GM10248 (cell line): ENCODE measurements at regions of chr12 and their contacts with region 1.

Region 1: DNA sequence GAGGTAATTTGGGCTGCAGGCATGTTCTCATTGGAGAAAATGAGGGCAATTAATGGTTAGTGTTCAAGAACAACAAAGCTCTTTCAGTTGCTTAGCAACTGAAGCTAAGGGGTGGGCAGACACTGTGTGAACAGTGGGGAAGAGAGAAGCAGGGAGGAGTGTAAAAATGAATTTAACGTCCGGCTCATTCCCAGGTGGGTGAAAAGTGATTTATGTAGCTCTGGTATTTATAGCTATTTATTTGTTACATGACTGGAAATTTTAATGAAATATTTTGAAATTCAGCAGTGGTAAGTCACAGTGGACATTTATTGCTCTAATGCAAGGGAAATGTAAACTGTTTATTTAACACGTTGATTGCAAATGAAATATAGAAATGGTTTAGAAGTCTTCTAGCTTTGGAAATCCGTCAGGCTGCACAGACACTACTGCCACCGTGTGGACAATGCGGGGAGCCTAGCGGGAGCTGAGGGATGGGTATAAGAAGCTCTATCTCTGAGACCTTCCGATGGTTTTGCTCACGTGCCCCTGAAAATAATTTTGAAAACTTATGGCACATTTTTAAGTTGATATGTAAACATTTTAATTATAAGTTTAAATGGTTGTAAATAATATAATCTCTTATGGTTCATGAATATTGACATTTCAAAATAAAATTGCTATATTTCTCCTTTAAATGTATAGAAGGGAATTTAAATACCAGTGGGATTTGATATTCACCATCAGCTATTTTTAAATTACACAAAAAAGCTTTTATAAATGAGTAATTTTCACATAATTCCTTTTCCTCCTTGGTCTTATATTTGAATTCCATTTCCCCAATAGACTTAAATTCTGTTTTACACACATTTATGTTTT is 54.4 kb downstream of the E2F7 start:
- DNase-seq: peak; percentile 72
- CTCF ChIP-seq: peak; percentile 83

Region 2: GRCh38 chr12:76621582-76622024 is 389.3 kb before region 1 on chr12:
- CTCF ChIA-PET with region 1: interaction called, 45 read pairs
- POLR2A ChIA-PET with region 1: no interaction called
- DNase-seq: peak; percentile 63
- CTCF ChIP-seq: peak; percentile 87

Region 3: GRCh38 chr12:76927170-76927784 is 83.6 kb before region 1 on chr12:
- CTCF ChIA-PET with region 1: no interaction called
- POLR2A ChIA-PET with region 1: no interaction called
- DNase-seq: peak; percentile 44
- CTCF ChIP-seq: peak; percentile 34

Region 4: DNA sequence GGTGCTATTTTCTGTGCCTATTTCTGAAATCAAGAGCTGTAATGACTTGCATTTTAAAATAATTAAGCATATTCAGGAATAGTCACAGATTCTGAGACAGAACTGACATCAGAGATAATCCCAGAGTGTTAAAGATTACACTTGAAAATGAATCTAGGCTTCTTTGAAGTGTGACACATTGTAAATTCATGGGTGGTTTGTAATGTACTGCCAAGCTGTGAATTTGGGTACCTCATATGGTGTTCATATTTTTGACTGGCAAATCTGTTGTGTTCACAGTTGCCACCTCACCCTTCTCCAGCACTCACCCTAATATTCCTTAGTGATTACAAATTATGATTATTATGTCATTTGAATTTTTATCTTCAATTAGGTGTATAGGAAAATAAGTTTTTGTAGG is 53.6 kb before region 1 on chr12:
- CTCF ChIA-PET with region 1: interaction called, 10 read pairs
- POLR2A ChIA-PET with region 1: no interaction called
- DNase-seq: no peak
- CTCF ChIP-seq: no peak

Region 5: GRCh38 chr12:77023501-77023900 is 12.6 kb after region 1 on chr12:
- CTCF ChIA-PET with region 1: interaction called, 65 read pairs
- POLR2A ChIA-PET with region 1: no interaction called
- DNase-seq: no peak
- CTCF ChIP-seq: no peak

Region 6: DNA sequence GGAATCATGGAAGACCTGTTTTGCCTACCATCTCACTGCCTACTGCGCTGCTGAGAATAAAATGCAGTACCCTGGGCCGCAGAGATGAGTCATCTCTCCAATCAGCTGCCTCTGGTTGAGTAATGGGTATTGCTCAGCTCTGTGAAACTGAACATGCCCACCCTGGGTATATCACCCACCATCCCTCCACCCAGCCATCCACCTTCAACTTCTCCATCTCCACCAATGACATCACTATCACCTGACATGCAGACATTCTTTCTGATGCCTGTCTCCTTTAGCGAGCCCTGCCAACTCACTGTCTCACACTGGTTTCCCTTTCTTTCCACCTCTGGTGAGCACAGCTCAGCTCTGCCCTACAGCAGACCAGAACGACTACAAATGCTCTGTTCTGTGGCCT is 20.8 kb after region 1 on chr12:
- CTCF ChIA-PET with region 1: interaction called, 22 read pairs
- POLR2A ChIA-PET with region 1: no interaction called
- DNase-seq: no peak
- CTCF ChIP-seq: no peak

Region 7: DNA sequence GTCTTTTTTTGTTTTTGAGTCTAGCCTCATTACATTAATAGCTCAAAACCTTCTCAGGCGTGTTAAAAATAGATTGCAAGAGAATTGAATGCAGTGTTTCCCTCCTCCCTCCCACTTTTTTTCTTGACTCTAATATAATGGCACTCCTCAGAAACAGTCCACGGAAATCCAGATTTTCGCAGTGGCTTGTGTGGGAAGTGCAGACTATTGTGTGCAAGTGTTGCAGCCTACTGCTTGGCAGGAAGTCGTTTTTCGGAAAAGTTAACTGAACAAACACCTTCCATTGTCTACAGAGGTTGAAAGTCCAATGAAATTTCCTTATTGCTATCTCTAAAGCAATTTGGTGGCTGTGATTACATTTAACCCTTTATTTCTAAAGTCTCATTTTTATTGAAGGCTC is 202.4 kb after region 1 on chr12:
- CTCF ChIA-PET with region 1: no interaction called
- POLR2A ChIA-PET with region 1: no interaction called
- DNase-seq: no peak
- CTCF ChIP-seq: no peak